ENCODE measurements at regions of chr5 and their contacts with region 1.

Region 1: DNA sequence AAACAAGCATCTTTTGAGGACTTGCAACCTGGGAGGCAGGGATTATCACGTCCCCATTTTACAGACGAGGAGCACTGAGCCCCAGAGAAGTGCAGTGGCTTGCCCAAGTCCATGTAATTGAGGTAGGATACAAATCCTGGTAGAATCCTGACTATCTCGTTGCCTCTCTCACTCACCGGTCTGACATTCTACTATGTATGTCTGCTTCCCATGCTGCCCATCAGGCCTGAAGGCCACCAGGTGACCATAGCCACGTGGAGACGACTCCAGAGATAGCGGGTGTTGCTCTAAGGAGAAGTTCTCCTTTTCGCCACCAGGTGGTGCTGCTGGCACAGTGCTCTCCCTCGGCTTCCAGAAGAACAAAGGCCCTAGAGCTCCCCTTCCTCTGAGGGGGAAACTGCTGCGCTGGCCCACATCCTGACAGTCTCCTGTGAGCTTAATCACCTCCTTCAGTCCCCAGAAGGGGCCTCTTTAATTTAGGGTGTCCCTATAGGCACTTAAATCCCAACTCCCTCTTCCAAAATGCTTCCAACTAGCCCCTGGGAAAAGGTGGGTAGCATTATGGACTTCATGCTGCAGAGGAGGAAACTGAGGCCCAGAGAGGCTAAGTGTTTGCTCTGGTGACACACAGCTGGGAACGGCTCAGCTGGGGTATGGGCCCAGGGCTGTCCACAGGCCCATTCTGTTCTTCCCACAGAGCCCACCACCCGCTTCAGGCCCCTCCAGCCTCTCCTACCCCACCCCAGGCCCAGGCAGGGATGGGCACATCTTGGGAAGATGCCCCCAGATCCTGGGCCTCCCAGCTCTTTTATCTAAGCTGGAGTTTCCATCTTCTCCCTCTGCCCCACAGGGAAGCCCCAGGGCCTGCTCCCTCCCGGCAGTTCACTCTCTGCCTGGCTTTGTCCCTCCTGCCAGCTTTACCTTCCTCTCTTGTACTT is 6.4 kb downstream of the SLC34A1 start:
- DNase-seq: peak; percentile 95
- H3K4me3 Mint-ChIP-seq: peak overlapping the region; percentile 51
- H3K27ac Mint-ChIP-seq: peak overlapping the region; percentile 82
- H3K4me1 Mint-ChIP-seq: peaks cover 38% of the 10 kb centered on the region
- H3K27me3 Mint-ChIP-seq: no peaks in the 10 kb centered on the region
- CTCF ChIP-seq: peak; percentile 99

Region 2: DNA sequence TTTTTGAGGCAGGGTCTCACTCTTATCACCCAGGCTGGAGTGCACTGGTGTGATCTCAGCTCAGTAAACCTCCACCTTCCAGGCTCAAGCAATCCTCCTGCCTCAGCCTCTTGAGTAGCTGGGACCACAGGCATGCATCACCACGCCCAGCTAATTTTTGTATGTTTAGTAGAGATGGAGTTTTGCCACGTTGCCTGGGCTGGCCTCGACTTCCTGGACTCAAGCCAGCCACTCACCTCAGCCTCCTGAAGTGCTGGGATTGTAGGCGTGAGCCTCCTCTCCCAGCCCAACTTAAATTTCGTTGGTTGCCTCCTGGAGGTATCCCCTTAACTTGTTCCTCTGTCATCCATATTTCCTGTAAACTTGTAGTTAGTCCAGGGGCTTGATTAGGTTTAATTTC is 134.3 kb before region 1 on chr5:
- CTCF ChIA-PET with region 1: no interaction called
- intact Hi-C with region 1: no loop called
- DNase-seq: peak; percentile 43
- H3K4me3 Mint-ChIP-seq: no peak overlapping the region
- H3K27ac Mint-ChIP-seq: no peak overlapping the region
- H3K4me1 Mint-ChIP-seq: peaks cover 8% of the 10 kb centered on the region
- H3K27me3 Mint-ChIP-seq: no peaks in the 10 kb centered on the region
- CTCF ChIP-seq: no peak

Region 3: DNA sequence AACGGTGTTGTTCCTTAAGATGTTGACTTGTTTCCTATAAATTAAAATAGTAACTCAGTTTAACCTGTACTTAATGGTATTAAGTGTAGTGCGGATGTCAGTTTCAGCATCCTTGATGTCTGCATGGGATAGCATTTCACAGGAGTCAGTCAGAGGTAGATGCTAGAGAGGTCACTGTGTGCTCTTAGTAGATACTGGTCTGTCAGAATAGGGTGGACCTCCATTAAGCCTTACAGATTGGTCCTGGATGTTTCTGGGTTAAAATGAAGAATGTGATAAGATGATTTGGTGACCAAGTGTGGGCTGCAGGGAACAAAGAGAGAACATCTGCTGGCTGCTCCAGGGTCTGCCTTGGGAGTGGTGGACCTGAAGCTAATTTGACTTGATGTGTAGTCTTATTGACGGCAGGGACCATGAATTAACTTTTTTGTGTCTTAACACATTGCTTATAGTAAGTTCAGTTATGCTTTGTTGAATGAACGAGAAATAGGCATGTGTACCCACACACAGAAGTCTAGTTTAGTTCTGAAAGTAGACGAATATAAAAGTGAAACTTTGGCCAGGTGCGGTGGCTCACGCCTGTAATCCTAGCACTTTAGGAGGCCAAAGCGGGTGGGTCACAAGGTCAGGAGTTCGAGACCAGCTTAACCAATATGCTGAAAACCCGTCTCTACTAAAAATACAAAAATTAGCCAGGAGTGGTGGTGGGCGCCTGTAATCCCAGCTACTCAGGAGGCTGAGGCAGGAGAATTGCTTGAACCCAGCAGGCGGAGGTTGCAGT is 99.6 kb before region 1 on chr5:
- CTCF ChIA-PET with region 1: no interaction called
- intact Hi-C with region 1: no loop called
- DNase-seq: no peak
- H3K4me3 Mint-ChIP-seq: no peak overlapping the region
- H3K27ac Mint-ChIP-seq: no peak overlapping the region
- H3K4me1 Mint-ChIP-seq: no peaks in the 10 kb centered on the region
- H3K27me3 Mint-ChIP-seq: no peaks in the 10 kb centered on the region
- CTCF ChIP-seq: no peak

Region 4: DNA sequence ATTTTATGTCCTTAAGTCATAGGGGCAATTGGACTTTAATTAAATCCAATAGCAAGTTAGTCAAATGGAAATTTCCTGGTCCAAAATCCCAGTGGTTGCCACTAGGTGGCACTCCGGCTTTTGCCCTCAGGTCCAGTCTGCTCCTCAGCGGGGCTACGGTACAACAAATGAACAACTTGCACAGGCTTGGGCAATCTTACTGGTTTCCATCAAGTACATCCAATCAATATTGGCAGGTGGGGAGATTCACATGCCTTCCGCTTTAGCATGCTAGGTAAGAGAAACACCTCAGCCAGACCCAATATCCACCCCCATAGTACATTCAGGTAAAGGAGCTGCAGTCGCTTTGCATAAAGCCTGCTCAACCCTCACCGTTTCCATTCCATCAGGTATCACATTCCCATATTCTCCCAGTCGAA is 72.7 kb before region 1 on chr5:
- CTCF ChIA-PET with region 1: interaction called, 12 read pairs
- intact Hi-C with region 1: loop called (anchors 2 kb)
- DNase-seq: peak; percentile 89
- H3K4me3 Mint-ChIP-seq: no peak overlapping the region
- H3K27ac Mint-ChIP-seq: peak overlapping the region; percentile 65
- H3K4me1 Mint-ChIP-seq: peaks cover 39% of the 10 kb centered on the region
- H3K27me3 Mint-ChIP-seq: no peaks in the 10 kb centered on the region
- CTCF ChIP-seq: peak; percentile 86

Region 5: DNA sequence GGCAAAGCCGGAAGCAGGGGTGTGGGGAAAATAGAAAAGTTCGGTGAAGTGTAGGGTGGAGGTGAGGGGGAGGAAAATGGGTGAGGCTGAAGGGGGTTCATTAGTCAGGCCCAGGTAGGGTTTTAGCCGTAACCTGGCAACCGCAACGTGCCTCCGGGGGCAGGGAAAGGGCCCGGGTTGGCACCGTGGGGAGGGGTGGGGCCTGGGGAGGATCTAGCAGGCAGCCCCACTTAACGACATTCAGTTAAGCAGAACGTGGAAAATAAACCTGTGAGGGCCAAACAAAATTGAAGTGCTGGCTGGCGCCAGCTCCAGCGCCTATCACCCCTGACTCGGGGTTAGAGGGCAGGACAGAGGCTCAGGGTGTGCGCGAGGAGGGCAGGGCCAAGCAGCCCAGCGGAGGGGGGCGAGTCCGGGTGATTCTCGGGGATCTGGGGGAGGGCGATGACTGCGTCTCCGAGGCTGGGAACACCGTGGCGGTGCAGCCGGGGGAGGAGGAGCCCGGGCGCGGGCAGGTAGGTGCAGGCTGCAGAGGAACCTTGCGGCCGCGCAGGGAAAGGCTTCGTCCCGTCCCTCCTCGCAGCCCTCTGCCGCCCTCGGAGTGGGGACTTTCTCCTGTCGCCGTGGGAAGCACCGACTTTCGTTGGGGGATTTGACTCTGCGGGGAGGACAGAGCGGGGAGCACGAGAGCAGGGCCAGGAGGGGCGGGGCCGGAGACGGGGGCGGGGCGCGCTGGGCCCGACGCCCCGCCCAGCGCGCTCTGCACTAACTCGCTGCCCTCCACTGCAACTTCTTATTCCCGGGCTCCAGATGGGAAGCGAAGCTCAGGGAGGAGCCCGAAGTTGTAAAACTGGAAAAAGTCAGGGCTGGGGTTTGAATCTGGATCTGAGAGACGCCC is 27.8 kb before region 1 on chr5:
- CTCF ChIA-PET with region 1: interaction called, 12 read pairs
- intact Hi-C with region 1: no loop called
- DNase-seq: peak; percentile 69
- H3K4me3 Mint-ChIP-seq: peak overlapping the region; percentile 74
- H3K27ac Mint-ChIP-seq: peak overlapping the region; percentile 19
- H3K4me1 Mint-ChIP-seq: peaks cover 23% of the 10 kb centered on the region
- H3K27me3 Mint-ChIP-seq: no peaks in the 10 kb centered on the region
- CTCF ChIP-seq: no peak

Region 6: GRCh38 chr5:177378884-177379883 is 11.4 kb before region 1 on chr5:
- CTCF ChIA-PET with region 1: interaction called, 56 read pairs
- intact Hi-C with region 1: no loop called
- DNase-seq: peak; percentile 67
- H3K4me3 Mint-ChIP-seq: peak overlapping the region; percentile 49
- H3K27ac Mint-ChIP-seq: peak overlapping the region; percentile 90
- H3K4me1 Mint-ChIP-seq: peaks cover 49% of the 10 kb centered on the region
- H3K27me3 Mint-ChIP-seq: no peaks in the 10 kb centered on the region
- CTCF ChIP-seq: no peak

Region 7: DNA sequence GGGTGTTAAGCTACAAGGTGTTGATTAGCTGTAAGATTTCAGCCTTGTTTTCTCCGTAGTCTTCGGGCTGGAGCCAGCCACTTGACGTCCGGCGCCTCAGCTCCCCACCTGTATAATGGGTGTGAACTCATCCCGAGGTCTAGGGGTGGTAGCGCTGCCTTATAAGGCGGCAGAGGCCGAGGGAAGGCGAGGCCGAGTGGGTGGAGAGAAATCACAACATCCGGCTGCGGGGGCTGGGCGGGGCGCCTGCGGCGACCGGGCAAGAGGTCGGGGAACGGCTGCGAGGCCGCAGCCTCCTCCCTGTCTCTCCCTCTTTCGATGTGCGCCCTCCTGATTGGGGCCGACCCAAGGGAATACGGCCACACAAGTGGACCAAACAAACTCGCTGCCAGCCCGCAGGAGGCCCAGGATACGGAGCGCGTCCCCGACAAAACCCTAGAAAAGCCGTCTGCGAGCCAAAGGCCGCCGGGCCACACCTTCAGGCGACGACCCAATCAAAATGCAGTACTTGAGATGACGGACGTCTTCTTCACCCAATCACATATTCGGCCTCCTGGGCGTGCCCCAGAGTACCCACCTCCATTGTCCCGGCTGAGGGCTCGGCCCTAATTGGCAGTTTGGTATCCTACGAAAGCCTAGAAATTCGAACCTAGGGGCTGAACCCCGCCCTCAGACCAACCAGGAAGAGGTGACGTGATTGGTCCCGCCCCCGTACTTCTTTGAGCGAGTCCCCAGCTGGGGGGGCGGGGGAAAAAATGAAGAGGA is 35.4 kb after region 1 on chr5:
- CTCF ChIA-PET with region 1: interaction called, 23 read pairs
- intact Hi-C with region 1: no loop called
- DNase-seq: peak; percentile 100
- H3K4me3 Mint-ChIP-seq: peak overlapping the region; percentile 93
- H3K27ac Mint-ChIP-seq: peak overlapping the region; percentile 100
- H3K4me1 Mint-ChIP-seq: peaks cover 34% of the 10 kb centered on the region
- H3K27me3 Mint-ChIP-seq: peaks cover 12% of the 10 kb centered on the region
- CTCF ChIP-seq: no peak

Region 8: DNA sequence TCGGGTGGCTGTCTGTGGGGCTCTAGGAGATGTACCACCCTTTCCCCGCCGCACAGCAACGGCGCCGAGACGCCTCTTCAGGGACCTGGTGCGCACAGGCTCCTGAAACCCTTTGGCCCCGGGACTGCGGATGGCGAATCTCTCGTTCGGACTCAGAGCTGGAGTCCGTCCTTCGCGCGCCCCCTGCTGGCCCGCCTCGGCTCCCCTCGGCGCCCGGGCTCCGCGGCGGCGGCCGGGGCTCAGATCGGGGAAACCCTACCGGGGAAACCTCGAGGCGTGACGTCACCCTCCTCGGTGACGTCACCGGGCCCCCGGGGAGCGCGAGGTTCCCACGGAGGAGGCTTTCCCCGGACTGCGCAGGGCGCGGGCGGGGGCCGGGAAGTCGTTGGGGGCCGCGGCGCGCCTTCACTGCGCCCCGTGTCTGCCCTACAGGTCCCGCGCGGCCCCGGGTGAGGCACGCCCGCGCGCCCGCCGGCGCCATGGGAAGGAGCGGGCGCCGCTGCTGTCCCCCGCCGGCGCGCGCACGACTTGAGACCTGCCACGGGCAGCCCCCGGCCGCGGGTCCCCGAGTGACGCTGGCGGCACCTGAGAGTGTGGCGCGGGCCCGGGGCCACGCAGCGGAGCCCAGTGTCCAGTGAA is 63.9 kb after region 1 on chr5:
- CTCF ChIA-PET with region 1: interaction called, 41 read pairs
- intact Hi-C with region 1: no loop called
- DNase-seq: peak; percentile 99
- H3K4me3 Mint-ChIP-seq: peak overlapping the region; percentile 77
- H3K27ac Mint-ChIP-seq: peak overlapping the region; percentile 86
- H3K4me1 Mint-ChIP-seq: peaks cover 40% of the 10 kb centered on the region
- H3K27me3 Mint-ChIP-seq: no peaks in the 10 kb centered on the region
- CTCF ChIP-seq: peak; percentile 96